H1 (cell line): ENCODE measurements at regions of chr2 and their contacts with region 1.

Region 1: DNA sequence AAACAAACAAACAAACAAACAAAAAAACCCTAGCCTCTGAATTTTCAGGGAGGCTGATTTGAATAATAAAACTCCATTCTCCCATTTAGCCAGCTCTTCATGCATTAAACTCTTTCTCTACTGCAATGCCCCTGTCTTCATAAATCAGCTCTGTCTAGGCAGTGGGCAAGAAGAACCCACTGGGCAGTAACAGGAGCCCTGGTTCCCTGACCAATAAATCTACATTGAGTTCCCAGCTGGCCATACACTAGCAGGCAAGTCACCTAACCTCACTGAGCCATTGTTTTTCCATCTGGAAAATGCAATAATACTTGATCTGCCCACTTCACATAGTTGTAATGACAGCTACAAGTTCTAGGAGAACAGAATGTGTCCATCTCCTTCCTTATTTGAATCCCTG is 57.6 kb upstream of the YPEL5 start:
- DNase-seq: no peak
- H3K4me3 ChIP-seq: no peak overlapping the region
- H3K27ac ChIP-seq: no peak overlapping the region
- H3K4me1 ChIP-seq: peaks cover 0 to 2% (median 0%) of the 10 kb centered on the region in 4 experiments; a peak in 1 of 7 replicates
- H3K27me3 ChIP-seq: no peaks in the 10 kb centered on the region
- CTCF ChIP-seq: no peak
- EP300 ChIP-seq: no peak
- POLR2A ChIP-seq: no peak
- RAD21 ChIP-seq: no peak

Region 2: GRCh38 chr2:30031184-30031583 is 58.0 kb before region 1 on chr2:
- CTCF ChIA-PET with region 1: no interaction called
- POLR2A ChIA-PET with region 1: no interaction called
- DNase-seq: no peak
- H3K4me3 ChIP-seq: no peak overlapping the region
- H3K27ac ChIP-seq: no peak overlapping the region
- H3K4me1 ChIP-seq: peaks cover 1 to 12% (median 4%) of the 10 kb centered on the region in 4 experiments; a peak in 5 of 7 replicates
- H3K27me3 ChIP-seq: no peaks in the 10 kb centered on the region
- CTCF ChIP-seq: no peak
- EP300 ChIP-seq: no peak
- POLR2A ChIP-seq: no peak
- RAD21 ChIP-seq: no peak

Region 3: GRCh38 chr2:30072250-30072842 is 16.8 kb before region 1 on chr2:
- CTCF ChIA-PET with region 1: interaction called, 14 read pairs
- POLR2A ChIA-PET with region 1: no interaction called
- DNase-seq: peak; percentile 36 to 83
- H3K4me3 ChIP-seq: no peak overlapping the region
- H3K27ac ChIP-seq: no peak overlapping the region
- H3K4me1 ChIP-seq: peaks cover 0 to 3% (median 0%) of the 10 kb centered on the region in 4 experiments; a peak in 1 of 7 replicates
- H3K27me3 ChIP-seq: no peaks in the 10 kb centered on the region
- CTCF ChIP-seq: peak; percentile 69 to 95 (median 79)
- EP300 ChIP-seq: no peak
- POLR2A ChIP-seq: no peak
- RAD21 ChIP-seq: peak; percentile 93

Region 4: DNA sequence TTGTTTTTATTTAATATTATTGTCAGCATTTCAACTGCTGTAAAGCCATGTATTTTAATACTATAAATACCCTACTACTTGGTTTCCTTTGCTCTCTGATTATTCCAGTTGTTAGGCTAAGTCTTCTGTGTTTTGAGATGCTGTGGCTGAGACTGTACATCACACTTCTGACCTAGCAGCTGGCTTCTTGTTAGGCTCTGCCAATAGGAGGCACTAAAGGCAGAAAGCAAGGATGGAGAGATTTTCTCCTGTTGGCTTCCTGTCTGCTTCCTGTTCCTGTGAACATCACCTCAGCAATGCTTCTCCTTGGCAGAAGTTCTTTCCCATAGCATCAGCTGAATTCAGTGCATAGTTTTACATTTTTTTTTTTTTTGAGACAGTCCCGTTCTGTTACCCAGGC is 10.7 kb before region 1 on chr2:
- CTCF ChIA-PET with region 1: interaction called, 14 read pairs
- POLR2A ChIA-PET with region 1: no interaction called
- DNase-seq: no peak
- H3K4me3 ChIP-seq: no peak overlapping the region
- H3K27ac ChIP-seq: no peak overlapping the region
- H3K4me1 ChIP-seq: no peaks in the 10 kb centered on the region
- H3K27me3 ChIP-seq: no peaks in the 10 kb centered on the region
- CTCF ChIP-seq: peak in 2 of 3 experiments; percentile 26 to 39; a peak in 2 of 4 replicates
- EP300 ChIP-seq: no peak
- POLR2A ChIP-seq: no peak
- RAD21 ChIP-seq: 0 out of 4 replicates have a peak, but pooled peaks of 1 of the 2 experiments have one; percentile 9

Region 5: GRCh38 chr2:30115141-30115980 is 26.2 kb after region 1 on chr2:
- CTCF ChIA-PET with region 1: interaction called, 99 read pairs
- POLR2A ChIA-PET with region 1: no interaction called
- DNase-seq: peak; percentile 57 to 93
- H3K4me3 ChIP-seq: no peak overlapping the region
- H3K27ac ChIP-seq: no peak overlapping the region
- H3K4me1 ChIP-seq: peaks cover 0 to 7% (median 2%) of the 10 kb centered on the region in 4 experiments; a peak in 2 of 7 replicates
- H3K27me3 ChIP-seq: no peaks in the 10 kb centered on the region
- CTCF ChIP-seq: peak; percentile 91 to 99 (median 94)
- EP300 ChIP-seq: no peak
- POLR2A ChIP-seq: no peak
- RAD21 ChIP-seq: peak; percentile 91 to 95